Aorta (tissue), 5 donors: ENCODE measurements at regions of chr11 and their contacts with region 1.

Region 1: DNA sequence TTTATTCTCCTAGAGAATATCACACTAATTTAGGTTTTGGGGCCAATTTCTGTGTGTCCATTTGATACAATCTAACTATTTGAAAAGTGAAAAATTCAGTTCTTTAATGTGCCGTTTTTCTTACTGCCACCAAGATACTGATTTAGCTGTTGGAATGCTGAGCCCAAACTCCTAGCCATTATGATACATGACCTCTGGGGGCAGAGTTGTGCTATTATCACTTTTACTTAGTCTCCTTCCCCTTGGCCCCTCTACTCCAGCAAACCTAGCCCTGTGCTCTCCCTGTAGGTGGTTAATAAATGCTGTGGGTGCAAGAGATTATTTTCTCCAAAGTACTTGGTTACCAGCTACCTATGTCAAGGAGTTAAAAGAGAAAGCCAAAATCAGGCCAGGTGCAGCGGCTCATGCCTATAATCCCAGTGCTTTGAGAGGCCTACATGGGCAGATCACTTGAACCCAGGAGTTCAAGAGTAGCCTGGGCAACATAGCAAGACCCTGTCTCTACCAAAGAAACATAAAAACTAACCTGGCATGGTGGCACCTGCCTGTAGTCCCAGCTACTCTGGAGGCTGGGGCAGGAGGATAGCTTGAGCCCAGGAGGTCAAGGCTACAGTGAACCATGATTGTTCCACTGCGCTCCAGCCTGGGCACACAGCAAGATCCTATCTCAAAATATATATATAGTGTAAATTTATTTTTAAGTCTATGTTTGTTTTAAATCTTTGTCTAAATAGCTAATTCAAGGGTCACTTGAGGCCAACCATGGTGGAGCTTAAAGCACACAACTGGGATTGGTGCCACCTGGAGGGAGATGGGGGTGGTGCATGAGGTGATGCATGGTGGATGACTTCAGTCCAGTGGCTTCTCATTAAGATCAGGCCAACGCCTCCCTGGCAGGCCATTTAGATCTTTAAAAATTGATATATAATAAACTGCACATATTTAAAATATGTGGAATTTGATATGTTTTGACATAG is 193.2 kb upstream of the PLET1 start:
- DNase-seq: peak; percentile 52 to 77
- ATAC-seq: no peak
- H3K4me3 ChIP-seq: no peak overlapping the region
- H3K27ac ChIP-seq: no peak overlapping the region
- H3K4me1 ChIP-seq: peaks cover 0 to 2% of the 10 kb centered on the region in 2 donors
- H3K27me3 ChIP-seq: no peaks in the 10 kb centered on the region

Region 2: GRCh38 chr11:112555491-112556364 is 101.8 kb after region 1 on chr11:
- intact Hi-C with region 1: loop called in 1 of 2 experiments (anchors 10 kb)
- DNase-seq: peak; percentile 68 to 86
- ATAC-seq: peak; percentile 81
- H3K4me3 ChIP-seq: no peak overlapping the region
- H3K27ac ChIP-seq: no peak overlapping the region
- H3K4me1 ChIP-seq: no peaks in the 10 kb centered on the region
- H3K27me3 ChIP-seq: no peaks in the 10 kb centered on the region